CD8-positive, alpha-beta memory T cell (primary cell): ENCODE measurements at regions of chr6 and their contacts with region 1.

Region 1: DNA sequence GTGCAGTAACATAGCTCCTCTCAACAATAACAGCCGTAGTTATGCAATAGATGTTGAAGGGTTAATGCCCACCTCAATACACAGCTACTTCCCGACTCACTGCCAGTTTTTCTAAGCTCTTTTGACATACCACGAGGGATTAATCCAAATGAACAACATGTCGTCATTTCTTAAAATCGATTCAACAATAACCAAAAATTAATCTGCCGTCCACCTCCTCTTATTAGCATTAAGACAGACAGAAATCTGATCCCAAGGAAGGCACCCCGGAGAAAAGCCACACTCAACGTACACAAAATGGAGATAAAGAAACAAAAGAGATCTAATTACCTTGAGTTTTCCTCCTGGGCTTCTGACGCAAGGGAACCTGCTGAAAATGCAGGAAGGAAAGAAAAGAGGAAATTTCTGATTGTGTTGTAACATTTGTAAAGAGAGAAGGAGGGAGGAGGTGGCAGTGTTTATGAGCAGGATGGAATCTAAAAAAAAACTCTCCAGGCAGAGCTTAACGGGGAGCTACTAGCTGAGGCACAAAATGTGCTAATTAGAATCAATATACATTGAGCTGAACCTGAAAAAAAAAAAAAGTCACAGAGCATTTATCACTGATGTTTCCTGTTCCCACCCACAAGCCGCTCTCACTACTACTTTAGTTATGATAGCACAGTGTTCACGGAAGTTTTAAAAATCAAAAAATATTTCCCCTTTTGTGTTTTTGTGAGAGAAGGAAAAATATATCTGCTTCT is 109.3 kb downstream of the IPCEF1 start:
- DNase-seq: peak in 4 of 5 donors; percentile 20 to 60 (median 56)
- H3K4me3 ChIP-seq: peak overlapping the region; percentile 87
- H3K4me3 Mint-ChIP-seq: peak overlapping the region; percentile 91 to 99 (median 95)
- H3K27ac ChIP-seq: peak overlapping the region; percentile 72
- H3K27ac Mint-ChIP-seq: peak overlapping the region; percentile 93 to 98 (median 95)
- H3K4me1 ChIP-seq: peaks cover 68% of the 10 kb centered on the region
- H3K4me1 Mint-ChIP-seq: peaks cover 72 to 88% (median 80%) of the 10 kb centered on the region in 3 donors
- H3K27me3 ChIP-seq: no peaks in the 10 kb centered on the region
- H3K27me3 Mint-ChIP-seq: no peaks in the 10 kb centered on the region

Region 2: DNA sequence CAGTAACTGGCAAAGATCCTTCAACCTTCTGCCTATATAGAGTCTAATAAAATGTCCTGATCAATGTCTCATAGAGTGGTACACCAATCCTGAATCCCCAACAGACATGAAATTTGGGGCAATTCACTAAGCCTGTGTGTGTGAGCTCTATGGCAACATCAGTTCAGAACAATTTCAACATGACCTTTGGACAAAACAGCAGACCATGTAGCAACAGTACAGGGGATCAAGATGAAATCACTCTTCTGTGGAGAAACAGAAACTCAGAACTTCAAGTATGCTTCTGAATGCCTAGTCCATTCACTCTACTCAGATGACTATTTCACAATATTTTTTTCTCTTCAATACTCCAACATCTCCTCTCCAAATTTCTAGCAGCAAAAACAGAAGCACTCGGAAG is 257.3 kb before region 1 on chr6:
- CTCF ChIA-PET with region 1: no interaction called
- POLR2A ChIA-PET with region 1: no interaction called
- DNase-seq: no peak
- H3K4me3 ChIP-seq: no peak overlapping the region
- H3K4me3 Mint-ChIP-seq: no peak overlapping the region
- H3K27ac ChIP-seq: no peak overlapping the region
- H3K27ac Mint-ChIP-seq: no peak overlapping the region
- H3K4me1 ChIP-seq: no peaks in the 10 kb centered on the region
- H3K4me1 Mint-ChIP-seq: no peaks in the 10 kb centered on the region
- H3K27me3 ChIP-seq: no peaks in the 10 kb centered on the region
- H3K27me3 Mint-ChIP-seq: no peaks in the 10 kb centered on the region

Region 3: GRCh38 chr6:154156135-154156896 is 91.0 kb before region 1 on chr6:
- CTCF ChIA-PET with region 1: interaction called, 10 read pairs
- POLR2A ChIA-PET with region 1: no interaction called
- DNase-seq: peak; percentile 36 to 75 (median 43)
- H3K4me3 ChIP-seq: peak overlapping the region; percentile 61
- H3K4me3 Mint-ChIP-seq: peak overlapping the region; percentile 66 to 91 (median 84)
- H3K27ac ChIP-seq: no peak overlapping the region
- H3K27ac Mint-ChIP-seq: peak overlapping the region; percentile 83 to 98 (median 92)
- H3K4me1 ChIP-seq: peaks cover 40% of the 10 kb centered on the region
- H3K4me1 Mint-ChIP-seq: peaks cover 57 to 65% (median 63%) of the 10 kb centered on the region in 3 donors
- H3K27me3 ChIP-seq: no peaks in the 10 kb centered on the region
- H3K27me3 Mint-ChIP-seq: no peaks in the 10 kb centered on the region

Region 4: GRCh38 chr6:154229786-154230185 is 17.5 kb before region 1 on chr6:
- CTCF ChIA-PET with region 1: interaction called, 18 read pairs
- POLR2A ChIA-PET with region 1: interaction called, 8 read pairs
- DNase-seq: peak in 4 of 5 donors; percentile 26 to 54 (median 39)
- H3K4me3 ChIP-seq: peak overlapping the region; percentile 19
- H3K4me3 Mint-ChIP-seq: peak overlapping the region; percentile 82 to 89 (median 84)
- H3K27ac ChIP-seq: peak overlapping the region; percentile 15
- H3K27ac Mint-ChIP-seq: peak overlapping the region; percentile 76 to 97 (median 92)
- H3K4me1 ChIP-seq: peaks cover 77% of the 10 kb centered on the region
- H3K4me1 Mint-ChIP-seq: peaks cover 80 to 88% (median 84%) of the 10 kb centered on the region in 3 donors
- H3K27me3 ChIP-seq: no peaks in the 10 kb centered on the region
- H3K27me3 Mint-ChIP-seq: no peaks in the 10 kb centered on the region

Region 5: GRCh38 chr6:154386848-154387717 is 139.8 kb after region 1 on chr6:
- CTCF ChIA-PET with region 1: no interaction called
- POLR2A ChIA-PET with region 1: no interaction called
- DNase-seq: no peak
- H3K4me3 ChIP-seq: no peak overlapping the region
- H3K4me3 Mint-ChIP-seq: no peak overlapping the region
- H3K27ac ChIP-seq: no peak overlapping the region
- H3K27ac Mint-ChIP-seq: no peak overlapping the region
- H3K4me1 ChIP-seq: no peaks in the 10 kb centered on the region
- H3K4me1 Mint-ChIP-seq: no peaks in the 10 kb centered on the region
- H3K27me3 ChIP-seq: no peaks in the 10 kb centered on the region
- H3K27me3 Mint-ChIP-seq: peaks cover 11 to 35% of the 10 kb centered on the region in 2 donors